ENCODE measurements at regions of chr19 and their contacts with region 1.

Region 1: GRCh38 chr19:15449620-15450527 is at the start of gene WIZ:
- DNase-seq: peak; percentile 92
- ATAC-seq: peak; percentile 68
- H3K4me3 Mint-ChIP-seq: peak within 1 kb of the TSS; percentile 83
- H3K27ac Mint-ChIP-seq: peak within 1 kb of the TSS; percentile 89
- H3K4me1 Mint-ChIP-seq: peaks cover 25% of the 10 kb centered on the region
- H3K27me3 Mint-ChIP-seq: no peaks in the 10 kb centered on the region
- total RNA-seq, gene WIZ: 28.4 to 29.3 TPM

Region 2: GRCh38 chr19:15432629-15433518 is 17.0 kb before region 1 on chr19:
- POLR2A ChIA-PET with region 1: interaction called, 10 read pairs
- DNase-seq: peak; percentile 98
- ATAC-seq: peak; percentile 76
- H3K4me3 Mint-ChIP-seq: peak overlapping the region; percentile 93
- H3K27ac Mint-ChIP-seq: peak overlapping the region; percentile 96
- H3K4me1 Mint-ChIP-seq: peaks cover 22% of the 10 kb centered on the region
- H3K27me3 Mint-ChIP-seq: no peaks in the 10 kb centered on the region

Region 3: GRCh38 chr19:15469513-15470297 is 19.8 kb after region 1 on chr19:
- POLR2A ChIA-PET with region 1: no interaction called
- DNase-seq: peak; percentile 47
- ATAC-seq: peak; percentile 27
- H3K4me3 Mint-ChIP-seq: peak overlapping the region; percentile 82
- H3K27ac Mint-ChIP-seq: peak overlapping the region; percentile 74
- H3K4me1 Mint-ChIP-seq: peaks cover 48% of the 10 kb centered on the region
- H3K27me3 Mint-ChIP-seq: peaks cover 5% of the 10 kb centered on the region